ENCODE measurements at regions of chr10 and their contacts with region 1.

Region 1: DNA sequence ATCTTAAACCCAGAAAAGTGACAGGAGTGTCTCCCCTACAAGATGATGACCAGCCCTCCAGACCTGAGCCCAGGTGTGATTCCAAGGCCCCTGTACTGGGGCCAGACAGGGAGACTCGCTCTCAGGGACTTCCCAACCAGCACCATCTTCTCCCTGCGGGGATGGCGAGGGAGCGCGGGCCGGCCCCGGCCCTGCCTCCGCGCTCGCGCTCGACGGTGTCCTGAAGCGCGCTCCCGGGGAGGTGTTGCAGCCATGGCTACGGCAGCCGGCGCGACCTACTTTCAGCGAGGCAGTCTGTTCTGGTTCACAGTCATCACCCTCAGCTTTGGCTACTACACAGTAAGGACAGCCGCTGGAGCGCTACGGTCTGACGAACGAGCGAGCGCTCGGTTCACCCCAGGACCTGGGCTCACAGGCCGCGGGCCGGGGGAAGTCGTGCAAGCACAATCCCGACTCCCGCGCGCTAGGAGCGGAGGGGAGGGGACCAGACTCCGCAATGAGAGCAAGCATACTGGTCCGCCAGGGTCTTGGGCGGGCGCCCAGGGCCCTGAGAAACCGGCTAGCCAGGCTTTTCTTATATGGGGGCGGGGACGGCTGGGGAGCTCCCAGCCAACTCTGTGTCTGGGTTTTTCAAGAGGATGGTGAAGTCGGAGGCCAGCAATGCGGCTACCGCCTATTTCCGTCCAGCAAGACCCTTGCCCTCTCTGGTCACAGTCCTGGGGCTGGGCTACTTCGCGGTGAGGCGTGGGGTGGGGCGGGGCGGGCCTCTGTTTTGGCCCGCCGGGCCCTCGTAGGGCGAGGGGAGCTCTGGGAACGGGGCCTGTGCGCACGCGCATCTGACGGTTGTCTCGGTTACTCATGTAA is at the start of gene TMEM254:
- DNase-seq: peak; percentile 92 to 95
- H3K4me3 ChIP-seq: peak within 1 kb of the TSS; percentile 88
- H3K27ac ChIP-seq: peak within 1 kb of the TSS; percentile 78
- H3K4me1 ChIP-seq: peaks cover 41% of the 10 kb centered on the region
- H3K27me3 ChIP-seq: no peaks in the 10 kb centered on the region
- CTCF ChIP-seq: no peak
- total RNA-seq, gene TMEM254: 30.2 and 36.6 TPM in 2 replicates

Region 2: GRCh38 chr10:80100901-80101675 is 22.4 kb after region 1 on chr10:
- CTCF ChIA-PET with region 1: interaction called, 5 read pairs
- POLR2A ChIA-PET with region 1: no interaction called
- intact Hi-C with region 1: loop called (anchors 2 kb)
- DNase-seq: peak; percentile 67 to 84
- H3K4me3 ChIP-seq: peak overlapping the region; percentile 10; the same call in 1 of the 2 replicates
- H3K27ac ChIP-seq: 0 out of 2 replicates have a peak overlapping the region, but pooled peaks have one; percentile 1
- H3K4me1 ChIP-seq: peaks cover 18% of the 10 kb centered on the region
- H3K27me3 ChIP-seq: no peaks in the 10 kb centered on the region
- CTCF ChIP-seq: no peak

Region 3: GRCh38 chr10:80132299-80133139 is 53.8 kb after region 1 on chr10 and contains the start of gene PLAC9:
- CTCF ChIA-PET with region 1: interaction called, 3 read pairs
- POLR2A ChIA-PET with region 1: no interaction called
- intact Hi-C with region 1: loop called (anchors 5 kb)
- DNase-seq: no peak
- H3K4me3 ChIP-seq: no peak within 1 kb of the TSS
- H3K27ac ChIP-seq: no peak within 1 kb of the TSS
- H3K4me1 ChIP-seq: peaks cover 6% of the 10 kb centered on the region; the same call in 1 of the 2 replicates
- H3K27me3 ChIP-seq: no peaks in the 10 kb centered on the region
- CTCF ChIP-seq: no peak
- total RNA-seq, gene PLAC9: 2.1 TPM in 1 of 2 replicates, not detected in the other